ENCODE measurements at regions of chr12 and their contacts with region 1.

Region 1: GRCh38 chr12:40152783-40153383 is 47.0 kb upstream of the SLC2A13 start:
- DNase-seq: peak in 2 of 3 donors; percentile 38 to 77
- ATAC-seq: no peak
- H3K4me3 ChIP-seq: no peak overlapping the region
- H3K27ac ChIP-seq: no peak overlapping the region
- H3K4me1 ChIP-seq: no peaks in the 10 kb centered on the region
- H3K27me3 ChIP-seq: no peaks in the 10 kb centered on the region

Region 2: DNA sequence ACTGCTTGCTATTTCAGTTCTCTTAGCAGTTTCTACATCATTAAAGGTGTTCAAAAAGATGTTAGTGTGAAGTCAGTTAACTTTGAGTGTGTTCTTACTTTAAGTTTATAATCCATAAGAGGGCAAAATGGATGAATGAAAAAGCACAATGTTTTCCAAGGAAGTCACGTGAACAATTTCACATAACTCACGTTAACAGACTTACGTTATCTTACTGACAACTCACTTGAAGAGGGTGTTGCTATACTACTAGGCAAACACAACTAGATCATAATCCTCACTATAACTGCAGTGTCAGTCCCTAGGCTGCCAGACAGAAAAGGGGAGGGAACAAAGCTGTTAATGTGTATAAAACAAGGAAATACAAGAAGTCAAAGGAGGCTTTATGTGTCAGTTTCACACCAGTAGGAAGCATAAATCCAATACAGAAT is 53.4 kb before region 1 on chr12:
- intact Hi-C with region 1: no loop called
- DNase-seq: no peak
- ATAC-seq: peak; percentile 78 to 79
- H3K4me3 ChIP-seq: no peak overlapping the region
- H3K27ac ChIP-seq: no peak overlapping the region
- H3K4me1 ChIP-seq: peaks cover under 1% of the 10 kb centered on the region
- H3K27me3 ChIP-seq: no peaks in the 10 kb centered on the region

Region 3: DNA sequence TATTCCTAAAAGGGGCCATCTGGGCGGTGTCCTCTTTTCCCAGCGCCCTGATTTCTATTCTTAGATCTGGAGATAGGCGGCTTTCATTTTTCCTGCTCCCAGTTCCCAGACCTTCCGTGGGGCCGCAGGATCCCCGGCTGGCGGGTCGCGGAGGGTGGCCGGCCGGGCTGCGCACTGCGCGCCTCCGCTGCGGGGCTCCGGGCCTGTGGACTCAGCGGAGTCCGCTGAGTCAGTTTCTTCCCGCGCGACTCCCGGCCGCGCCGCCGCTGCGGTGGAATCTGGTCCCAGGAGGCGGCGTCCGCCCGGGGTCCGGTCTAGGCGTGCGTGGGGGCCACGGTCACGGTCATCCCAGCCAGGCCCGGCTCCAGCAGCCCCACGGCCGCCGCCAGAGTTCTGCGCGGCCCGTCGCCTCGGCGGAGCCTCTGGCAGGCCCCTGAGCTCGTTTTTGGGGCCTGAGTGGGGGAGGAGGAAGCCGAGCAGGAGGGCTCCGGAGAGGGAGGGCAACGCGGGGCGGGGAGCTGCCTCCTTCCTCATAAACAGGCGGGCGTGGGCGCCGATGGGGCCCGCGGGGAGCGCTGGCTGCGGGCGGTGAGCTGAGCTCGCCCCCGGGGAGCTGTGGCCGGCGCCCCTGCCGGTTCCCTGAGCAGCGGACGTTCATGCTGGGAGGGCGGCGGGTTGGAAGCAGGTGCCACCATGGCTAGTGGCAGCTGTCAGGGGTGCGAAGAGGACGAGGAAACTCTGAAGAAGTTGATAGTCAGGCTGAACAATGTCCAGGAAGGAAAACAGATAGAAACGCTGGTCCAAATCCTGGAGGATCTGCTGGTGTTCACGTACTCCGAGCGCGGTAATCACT is 71.8 kb after region 1 on chr12 and contains the start of gene LRRK2:
- intact Hi-C with region 1: loop called in 3 of 4 experiments (anchors 5 to 10 kb)
- DNase-seq: peak; percentile 89 to 95 (median 94)
- ATAC-seq: peak; percentile 95 to 96
- H3K4me3 ChIP-seq: peak within 1 kb of the TSS; percentile 93
- H3K27ac ChIP-seq: peak within 1 kb of the TSS; percentile 96
- H3K4me1 ChIP-seq: no peaks in the 10 kb centered on the region
- H3K27me3 ChIP-seq: no peaks in the 10 kb centered on the region
- total RNA-seq, gene LRRK2: 11.2 to 16.8 (median 12.1) TPM

Region 4: GRCh38 chr12:40312982-40313576 is 160.2 kb after region 1 on chr12:
- intact Hi-C with region 1: loop called in 1 of 4 experiments (anchors 10 kb)
- DNase-seq: no peak
- ATAC-seq: no peak
- H3K4me3 ChIP-seq: no peak overlapping the region
- H3K27ac ChIP-seq: no peak overlapping the region
- H3K4me1 ChIP-seq: no peaks in the 10 kb centered on the region
- H3K27me3 ChIP-seq: no peaks in the 10 kb centered on the region

Measured in right cardiac atrium (tissue), 5 donors.